ENCODE measurements at regions of chr3 and their contacts with region 1.

Region 1: DNA sequence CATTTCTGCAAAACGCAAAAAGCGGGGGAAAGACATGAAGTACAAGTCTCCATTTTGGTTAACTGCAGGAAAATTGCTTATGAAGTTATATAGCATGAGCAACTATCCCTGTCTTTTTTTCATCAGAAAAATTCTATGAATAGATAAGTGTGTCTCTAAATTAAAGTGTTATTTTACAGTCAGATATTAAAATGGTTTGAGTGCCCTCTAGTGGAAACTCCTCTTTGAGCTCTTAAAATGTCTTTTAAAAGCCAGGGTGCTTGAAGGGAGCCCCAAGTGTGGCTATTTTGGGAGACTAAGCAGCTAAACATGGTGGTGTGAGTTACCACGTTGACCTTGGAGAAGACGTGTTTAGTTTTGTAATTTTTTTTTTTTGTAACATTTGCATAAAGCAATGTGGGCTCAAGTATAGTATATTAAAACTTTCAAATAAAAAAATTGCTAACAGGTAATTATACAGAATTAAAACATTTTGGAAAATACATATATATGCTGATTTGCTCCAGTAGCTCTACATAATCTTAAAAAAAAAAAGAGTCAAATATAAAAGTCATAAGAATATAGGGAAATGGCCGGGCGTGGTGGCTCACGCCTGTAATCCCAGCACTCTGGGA is 77.2 kb downstream of the PPP2R3A start:
- DNase-seq: peak; percentile 35
- ATAC-seq: no peak
- H3K4me3 ChIP-seq: no peak overlapping the region
- H3K27ac ChIP-seq: no peak overlapping the region
- H3K4me1 ChIP-seq: no peaks in the 10 kb centered on the region
- H3K27me3 ChIP-seq: no peaks in the 10 kb centered on the region
- CTCF ChIP-seq: peak; percentile 44
- EP300 ChIP-seq: no peak
- POLR2A ChIP-seq: no peak
- RAD21 ChIP-seq: no peak

Region 2: DNA sequence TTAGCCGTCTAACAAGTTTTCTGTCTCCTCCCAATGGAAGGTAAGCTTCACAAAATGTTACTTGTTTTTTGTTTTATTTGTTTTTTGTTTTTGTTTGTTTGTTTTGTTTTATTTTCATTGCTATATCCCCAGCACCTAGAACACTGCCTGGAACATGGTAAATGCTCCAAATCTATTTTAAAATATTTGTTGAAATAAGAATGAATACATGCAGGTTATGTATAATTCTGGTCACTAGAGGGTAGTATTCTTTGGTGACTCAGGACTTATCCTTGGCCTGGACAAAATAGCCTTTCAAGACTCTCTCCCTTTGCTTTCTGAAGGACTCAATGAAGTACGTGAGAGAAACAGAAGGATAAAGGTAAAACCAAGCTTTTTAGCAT is 124.1 kb before region 1 on chr3:
- CTCF ChIA-PET with region 1: interaction called, 3 read pairs
- POLR2A ChIA-PET with region 1: no interaction called
- in situ Hi-C with region 1: loop called (anchors 10 kb)
- intact Hi-C with region 1: loop called (anchors 1 kb)
- DNase-seq: peak; percentile 7
- ATAC-seq: 0 out of 3 replicates have a peak, but pooled peaks have one; percentile 27
- H3K4me3 ChIP-seq: no peak overlapping the region
- H3K27ac ChIP-seq: no peak overlapping the region
- H3K4me1 ChIP-seq: no peaks in the 10 kb centered on the region
- H3K27me3 ChIP-seq: no peaks in the 10 kb centered on the region; a peak in 1 of 5 replicates
- CTCF ChIP-seq: 0 out of 2 replicates have a peak, but pooled peaks have one; percentile 9
- EP300 ChIP-seq: no peak
- POLR2A ChIP-seq: no peak
- RAD21 ChIP-seq: no peak